Activated CD4-positive, alpha-beta T cell treated with anti-CD3 and anti-CD28 coated beads, Interleukin-2, amount 10 ng/mL, durations not matched to agents 24 days and 14 days (primary cell): ENCODE measurements at regions of chr10 and their contacts with region 1.

Region 1: GRCh38 chr10:58334817-58335305 is at the start of gene UBE2D1:
- DNase-seq: peak; percentile 94
- H3K4me3 Mint-ChIP-seq: peak within 1 kb of the TSS; percentile 98
- H3K27ac Mint-ChIP-seq: peak within 1 kb of the TSS; percentile 88
- H3K4me1 Mint-ChIP-seq: peaks cover 22% of the 10 kb centered on the region
- H3K27me3 Mint-ChIP-seq: peaks cover 15% of the 10 kb centered on the region
- total RNA-seq, gene UBE2D1: 15.1 and 19.4 TPM in 2 replicates

Region 2: DNA sequence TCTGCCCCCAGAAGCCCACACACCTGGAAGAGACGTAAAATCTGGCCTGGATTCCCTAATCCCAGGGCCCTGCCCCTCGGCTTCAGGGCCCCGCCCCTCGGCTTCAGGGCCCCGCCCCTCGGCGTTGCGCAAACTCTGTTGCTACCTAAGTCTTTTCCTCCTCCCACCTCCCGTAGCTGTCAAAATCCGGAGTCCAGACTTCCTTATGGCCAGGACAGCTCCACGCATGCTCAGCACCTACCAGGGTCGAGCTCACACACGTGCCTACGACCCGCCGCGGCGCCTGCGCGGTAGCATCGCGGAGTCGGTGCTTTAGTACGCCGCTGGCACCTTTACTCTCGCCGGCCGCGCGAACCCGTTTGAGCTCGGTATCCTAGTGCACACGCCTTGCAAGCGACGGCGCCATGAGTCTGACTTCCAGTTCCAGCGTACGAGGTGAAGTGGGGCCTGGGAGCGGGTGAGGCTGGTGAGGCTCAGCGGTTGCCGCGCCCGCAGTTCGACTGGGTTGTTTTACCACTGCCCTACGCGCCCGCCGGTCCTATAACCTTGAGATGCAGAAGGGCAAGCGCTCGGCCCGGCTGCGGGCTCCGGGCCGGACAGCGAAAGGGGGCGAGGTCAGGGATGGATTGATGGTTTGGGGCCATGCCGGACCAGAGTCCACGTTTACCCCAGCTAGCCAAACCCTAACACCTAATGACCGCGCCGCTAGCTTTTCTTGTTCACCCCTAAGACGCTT is 65.8 kb before region 1 on chr10 and contains the start of gene CISD1:
- intact Hi-C with region 1: loop called (anchors 1 kb)
- DNase-seq: peak; percentile 99
- H3K4me3 Mint-ChIP-seq: peak within 1 kb of the TSS; percentile 100
- H3K27ac Mint-ChIP-seq: peak within 1 kb of the TSS; percentile 98
- H3K4me1 Mint-ChIP-seq: peaks cover 31% of the 10 kb centered on the region
- H3K27me3 Mint-ChIP-seq: peaks cover 2% of the 10 kb centered on the region
- total RNA-seq, gene CISD1: 62.6 and 64.2 TPM in 2 replicates

Region 3: DNA sequence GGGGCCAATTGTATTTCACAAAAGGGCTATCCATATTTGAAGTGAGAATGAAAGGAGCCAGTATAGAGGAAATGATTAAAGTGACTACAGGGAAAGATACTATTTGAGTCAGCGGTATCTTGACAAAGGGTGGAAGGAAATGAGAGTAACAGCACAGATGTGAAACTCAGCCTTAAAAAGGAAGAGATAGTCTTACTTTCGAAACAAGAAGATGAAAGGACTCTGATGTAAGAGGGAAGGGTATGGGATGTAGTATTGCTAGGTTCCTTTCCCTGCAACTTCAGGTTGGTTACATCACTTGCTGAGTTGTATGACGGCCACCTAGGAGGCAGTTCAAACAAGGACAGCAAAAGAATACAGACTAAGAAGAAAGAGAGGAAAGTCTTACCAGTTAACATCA is 52.2 kb before region 1 on chr10:
- intact Hi-C with region 1: loop called (anchors 5 kb)
- DNase-seq: peak; percentile 81
- H3K4me3 Mint-ChIP-seq: peak overlapping the region; percentile 63
- H3K27ac Mint-ChIP-seq: peak overlapping the region; percentile 70
- H3K4me1 Mint-ChIP-seq: peaks cover 32% of the 10 kb centered on the region
- H3K27me3 Mint-ChIP-seq: no peaks in the 10 kb centered on the region

Region 4: DNA sequence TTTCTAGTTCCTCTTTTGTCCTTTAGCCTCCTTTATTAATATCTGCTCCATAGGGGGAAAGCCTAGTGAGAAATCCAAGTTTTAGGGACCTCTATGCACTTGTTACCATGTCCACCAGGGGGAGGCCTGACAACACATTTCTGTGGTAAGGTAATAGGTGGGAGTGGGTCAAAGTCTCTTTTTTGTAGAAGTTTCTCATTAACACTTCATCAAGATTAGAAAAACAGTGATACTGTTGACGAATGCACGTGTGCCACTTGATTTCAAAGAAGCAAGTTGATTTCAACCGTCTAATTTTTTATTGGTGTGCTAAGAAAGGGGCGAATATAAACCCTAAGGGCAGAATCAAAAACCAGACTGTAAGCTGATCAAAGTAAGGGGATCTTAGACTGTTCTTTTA is 35.3 kb before region 1 on chr10:
- intact Hi-C with region 1: loop called (anchors 5 kb)
- DNase-seq: peak; percentile 85
- H3K4me3 Mint-ChIP-seq: no peak overlapping the region
- H3K27ac Mint-ChIP-seq: no peak overlapping the region
- H3K4me1 Mint-ChIP-seq: peaks cover 2% of the 10 kb centered on the region
- H3K27me3 Mint-ChIP-seq: peaks cover 19% of the 10 kb centered on the region

Region 5: GRCh38 chr10:58319599-58319998 is 15.3 kb before region 1 on chr10:
- intact Hi-C with region 1: no loop called
- DNase-seq: no peak
- H3K4me3 Mint-ChIP-seq: no peak overlapping the region
- H3K27ac Mint-ChIP-seq: no peak overlapping the region
- H3K4me1 Mint-ChIP-seq: peaks cover 6% of the 10 kb centered on the region
- H3K27me3 Mint-ChIP-seq: peaks cover 11% of the 10 kb centered on the region

Region 6: GRCh38 chr10:58622246-58622645 is 287.4 kb after region 1 on chr10:
- intact Hi-C with region 1: no loop called
- DNase-seq: no peak
- H3K4me3 Mint-ChIP-seq: no peak overlapping the region
- H3K27ac Mint-ChIP-seq: no peak overlapping the region
- H3K4me1 Mint-ChIP-seq: no peaks in the 10 kb centered on the region
- H3K27me3 Mint-ChIP-seq: no peaks in the 10 kb centered on the region